Lower leg skin (tissue), 4 donors: ENCODE measurements at regions of chrX and their contacts with region 1.

Region 1: DNA sequence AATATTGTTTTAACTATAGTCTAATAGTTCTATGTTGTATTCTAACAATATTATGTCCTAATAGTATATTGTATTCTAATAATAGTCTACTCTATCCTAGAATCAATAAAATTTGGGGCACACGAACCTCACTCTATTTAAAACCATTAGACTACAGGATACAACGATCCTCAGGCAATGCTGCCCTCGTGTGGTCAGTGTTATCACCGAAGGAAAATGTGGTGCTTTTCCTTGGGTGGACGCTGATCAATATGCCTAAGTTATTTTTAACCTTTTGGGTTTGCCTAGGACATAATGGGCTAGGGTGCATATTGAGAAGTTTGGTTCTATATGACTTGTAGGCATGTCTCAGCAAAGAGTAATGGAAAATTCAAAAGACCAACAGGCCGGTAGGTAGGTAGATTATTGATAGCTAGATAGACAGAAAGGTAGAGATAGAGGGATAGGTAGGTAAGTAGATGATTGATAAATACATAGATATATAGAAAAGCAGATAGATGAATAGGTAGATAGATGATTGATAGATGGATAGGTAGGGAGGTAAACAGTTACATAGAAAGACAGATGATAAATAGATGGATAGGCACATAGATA is 75.1 kb downstream of the PRKX start:
- DNase-seq: peak in 1 of 2 donors; percentile 81
- H3K4me3 ChIP-seq: no peak overlapping the region
- CTCF ChIP-seq: no peak
- POLR2A ChIP-seq: no peak

Region 2: GRCh38 chrX:3037218-3037617 is 601.2 kb before region 1 on chrX:
- intact Hi-C with region 1: loop called (anchors 10 kb)
- DNase-seq: no peak
- H3K4me3 ChIP-seq: no peak overlapping the region
- CTCF ChIP-seq: no peak
- POLR2A ChIP-seq: no peak

Region 3: GRCh38 chrX:3244955-3245354 is 393.4 kb before region 1 on chrX:
- intact Hi-C with region 1: no loop called
- DNase-seq: no peak
- H3K4me3 ChIP-seq: no peak overlapping the region
- CTCF ChIP-seq: no peak
- POLR2A ChIP-seq: no peak